Cardiac septum (tissue), 1 donor: ENCODE measurements at regions of chr1 and their contacts with region 1.

Region 1: GRCh38 chr1:205668951-205669340 is 11.4 kb downstream of the SLC45A3 start:
- DNase-seq: no peak

Region 2: DNA sequence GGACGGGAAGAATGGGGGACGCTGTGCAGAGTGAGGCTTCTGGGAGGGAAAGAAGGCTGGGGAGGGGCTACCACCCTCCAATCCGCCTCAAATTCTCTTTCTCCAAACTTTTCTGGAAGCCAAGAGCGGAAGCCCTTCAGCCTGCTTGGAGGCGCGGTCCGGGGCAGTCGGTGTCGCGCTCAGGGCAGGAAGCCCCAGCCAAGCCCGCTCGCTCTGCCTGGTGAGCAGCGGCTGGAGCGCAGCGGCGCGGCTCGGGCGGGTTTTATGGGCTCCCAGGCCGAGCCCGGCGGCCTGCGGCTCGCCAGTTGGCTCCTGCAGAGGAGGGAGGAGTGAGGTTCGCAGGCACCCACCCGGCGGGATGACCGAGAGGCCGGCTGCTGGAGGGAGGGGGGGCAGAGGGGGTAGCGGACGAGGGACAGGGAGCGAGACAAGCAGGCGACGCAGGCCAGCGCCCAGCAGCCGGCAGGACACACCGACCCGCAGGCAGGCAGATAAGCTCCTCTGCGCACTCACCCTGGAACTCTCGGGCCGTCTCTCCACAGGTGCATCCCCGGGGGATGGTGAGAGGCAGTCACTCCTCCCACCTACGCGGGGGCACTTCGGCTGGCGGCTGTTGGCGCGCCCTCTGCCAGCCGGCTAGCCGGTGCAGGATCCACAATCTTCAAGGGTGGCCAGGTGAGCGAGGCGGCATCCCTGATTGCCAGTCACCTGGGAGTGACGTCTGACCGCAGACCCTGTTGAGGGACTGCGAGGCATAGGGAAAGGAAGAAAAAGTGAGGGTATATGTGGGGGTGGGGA is 448.4 kb after region 1 on chr1 and contains the start of gene AVPR1B:
- intact Hi-C with region 1: loop called (anchors 10 kb)
- DNase-seq: no peak
- total RNA-seq, gene AVPR1B: not detected